Activated CD4-positive, alpha-beta memory T cell treated with anti-CD3 and anti-CD28 coated beads for 36 hours (primary cell): ENCODE measurements at regions of chr5 and their contacts with region 1.

Region 1: DNA sequence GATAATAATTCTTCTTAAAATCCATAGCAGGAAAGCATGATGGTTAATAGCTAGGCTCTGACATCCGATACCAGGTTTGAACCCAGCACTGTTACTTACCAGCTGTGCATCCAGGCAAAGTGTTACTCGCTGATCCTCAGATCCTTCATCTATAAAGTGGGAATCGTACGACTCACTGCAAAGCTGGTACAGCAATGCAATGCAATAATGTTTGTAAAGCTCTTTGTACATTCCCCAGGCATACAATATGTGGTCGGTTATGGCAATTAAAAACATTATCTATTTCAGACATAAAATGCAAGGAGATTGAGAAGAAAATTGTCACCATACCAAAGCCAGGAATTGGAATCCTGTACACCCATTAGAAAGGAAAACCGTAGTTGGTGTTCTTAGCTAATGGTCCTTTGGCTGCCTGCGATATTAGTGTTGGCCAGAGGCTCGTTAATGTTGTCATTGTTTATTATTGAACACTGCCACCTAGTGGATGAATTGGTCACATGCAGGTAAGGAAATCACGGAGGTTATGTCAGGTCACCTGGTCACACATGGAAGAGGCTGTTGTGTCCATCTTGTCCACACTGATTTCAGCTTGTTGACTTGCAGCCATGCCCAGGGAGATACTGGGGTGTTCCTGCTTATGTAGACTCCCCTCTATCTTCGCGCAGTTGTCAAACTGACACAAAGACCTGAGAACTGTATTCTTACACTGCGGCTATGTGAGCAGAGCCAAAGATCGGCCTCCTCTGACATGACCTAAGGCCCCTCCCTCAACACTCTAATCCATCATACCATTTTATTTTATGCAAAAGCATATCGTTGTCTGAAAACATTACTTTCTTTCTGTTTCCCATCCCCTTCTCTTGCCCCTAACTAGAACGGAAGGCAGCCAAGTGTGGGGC is 87.5 kb upstream of the PPP2R2B start:
- DNase-seq: peak; percentile 37
- H3K4me3 Mint-ChIP-seq: no peak overlapping the region
- H3K27ac Mint-ChIP-seq: no peak overlapping the region
- H3K4me1 Mint-ChIP-seq: no peaks in the 10 kb centered on the region
- H3K27me3 Mint-ChIP-seq: no peaks in the 10 kb centered on the region

Region 2: DNA sequence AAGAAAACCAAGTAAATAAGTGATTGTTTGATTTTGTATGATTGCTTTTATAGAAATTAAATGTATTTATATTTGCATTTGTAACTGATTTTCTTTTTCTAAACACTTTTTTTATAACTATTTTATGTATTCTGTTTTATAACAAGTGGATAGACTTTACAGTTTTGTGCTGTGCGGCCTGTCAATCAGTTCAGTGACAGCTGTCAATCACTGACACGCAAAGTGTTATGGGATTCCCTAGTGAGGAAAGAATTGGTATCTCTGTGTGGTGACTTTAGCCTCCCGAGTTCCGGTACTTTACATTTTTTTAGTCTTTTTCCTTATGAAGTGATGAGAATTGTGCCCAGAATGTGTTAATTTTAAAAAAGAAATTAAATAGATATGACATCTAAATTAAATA is 466.3 kb before region 1 on chr5:
- CTCF ChIA-PET with region 1: no interaction called
- POLR2A ChIA-PET with region 1: no interaction called
- intact Hi-C with region 1: no loop called
- DNase-seq: no peak
- H3K4me3 Mint-ChIP-seq: no peak overlapping the region
- H3K27ac Mint-ChIP-seq: no peak overlapping the region
- H3K4me1 Mint-ChIP-seq: no peaks in the 10 kb centered on the region
- H3K27me3 Mint-ChIP-seq: no peaks in the 10 kb centered on the region

Region 3: GRCh38 chr5:146533260-146533857 is 432.7 kb before region 1 on chr5:
- CTCF ChIA-PET with region 1: interaction called, 92 read pairs
- POLR2A ChIA-PET with region 1: no interaction called
- intact Hi-C with region 1: loop called (anchors 1 kb)
- DNase-seq: peak; percentile 83
- H3K4me3 Mint-ChIP-seq: no peak overlapping the region
- H3K27ac Mint-ChIP-seq: no peak overlapping the region
- H3K4me1 Mint-ChIP-seq: peaks cover 4% of the 10 kb centered on the region
- H3K27me3 Mint-ChIP-seq: peaks cover under 1% of the 10 kb centered on the region

Region 4: GRCh38 chr5:146541958-146542849 is 423.8 kb before region 1 on chr5:
- CTCF ChIA-PET with region 1: interaction called, 70 read pairs
- POLR2A ChIA-PET with region 1: no interaction called
- intact Hi-C with region 1: loop called (anchors 1 kb)
- DNase-seq: peak; percentile 79
- H3K4me3 Mint-ChIP-seq: no peak overlapping the region
- H3K27ac Mint-ChIP-seq: no peak overlapping the region
- H3K4me1 Mint-ChIP-seq: peaks cover 2% of the 10 kb centered on the region
- H3K27me3 Mint-ChIP-seq: no peaks in the 10 kb centered on the region

Region 5: DNA sequence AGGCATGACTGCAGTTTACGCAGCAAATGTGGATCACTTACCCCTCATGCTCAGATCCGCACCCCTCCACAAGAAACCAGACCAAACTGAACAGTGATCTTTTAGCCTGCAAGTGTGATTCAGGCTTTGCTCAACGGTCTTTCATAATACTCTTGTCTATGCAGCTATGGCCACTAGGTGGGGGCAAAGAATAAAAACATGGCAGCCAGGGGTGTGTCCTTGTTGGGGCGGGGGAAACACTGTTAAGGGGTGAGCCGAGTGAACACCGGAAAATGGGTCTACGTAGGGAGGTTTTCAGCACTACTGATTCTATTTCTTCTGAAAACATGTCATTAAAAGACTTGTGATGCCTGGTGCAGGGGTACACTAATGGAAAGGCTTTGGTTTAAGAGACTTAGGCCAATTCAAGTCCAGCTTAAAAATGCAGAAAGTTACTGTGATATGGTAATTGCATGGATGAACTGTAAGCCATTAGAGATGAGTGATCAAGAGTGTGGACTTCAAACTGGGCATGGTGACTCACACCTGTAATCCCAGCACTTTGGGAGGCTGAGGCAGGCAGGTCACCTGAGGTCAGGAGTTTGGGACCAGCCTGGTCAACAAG is 400.1 kb before region 1 on chr5:
- CTCF ChIA-PET with region 1: interaction called, 25 read pairs
- POLR2A ChIA-PET with region 1: no interaction called
- intact Hi-C with region 1: loop called (anchors 1 kb)
- DNase-seq: peak; percentile 56
- H3K4me3 Mint-ChIP-seq: no peak overlapping the region
- H3K27ac Mint-ChIP-seq: no peak overlapping the region
- H3K4me1 Mint-ChIP-seq: peaks cover 5% of the 10 kb centered on the region
- H3K27me3 Mint-ChIP-seq: no peaks in the 10 kb centered on the region

Region 6: GRCh38 chr5:146662229-146662628 is 303.8 kb before region 1 on chr5:
- CTCF ChIA-PET with region 1: interaction called, 102 read pairs
- POLR2A ChIA-PET with region 1: no interaction called
- intact Hi-C with region 1: loop called (anchors 1 kb)
- DNase-seq: no peak
- H3K4me3 Mint-ChIP-seq: no peak overlapping the region
- H3K27ac Mint-ChIP-seq: no peak overlapping the region
- H3K4me1 Mint-ChIP-seq: peaks cover 4% of the 10 kb centered on the region
- H3K27me3 Mint-ChIP-seq: no peaks in the 10 kb centered on the region

Region 7: GRCh38 chr5:146813346-146814157 is 152.5 kb before region 1 on chr5:
- CTCF ChIA-PET with region 1: no interaction called
- POLR2A ChIA-PET with region 1: no interaction called
- intact Hi-C with region 1: no loop called
- DNase-seq: no peak
- H3K4me3 Mint-ChIP-seq: no peak overlapping the region
- H3K27ac Mint-ChIP-seq: no peak overlapping the region
- H3K4me1 Mint-ChIP-seq: peaks cover 4% of the 10 kb centered on the region
- H3K27me3 Mint-ChIP-seq: no peaks in the 10 kb centered on the region

Region 8: GRCh38 chr5:146952168-146952567 is 13.8 kb before region 1 on chr5:
- CTCF ChIA-PET with region 1: interaction called, 13 read pairs
- POLR2A ChIA-PET with region 1: no interaction called
- intact Hi-C with region 1: no loop called
- DNase-seq: no peak
- H3K4me3 Mint-ChIP-seq: no peak overlapping the region
- H3K27ac Mint-ChIP-seq: no peak overlapping the region
- H3K4me1 Mint-ChIP-seq: no peaks in the 10 kb centered on the region
- H3K27me3 Mint-ChIP-seq: peaks cover 3% of the 10 kb centered on the region

Region 9: DNA sequence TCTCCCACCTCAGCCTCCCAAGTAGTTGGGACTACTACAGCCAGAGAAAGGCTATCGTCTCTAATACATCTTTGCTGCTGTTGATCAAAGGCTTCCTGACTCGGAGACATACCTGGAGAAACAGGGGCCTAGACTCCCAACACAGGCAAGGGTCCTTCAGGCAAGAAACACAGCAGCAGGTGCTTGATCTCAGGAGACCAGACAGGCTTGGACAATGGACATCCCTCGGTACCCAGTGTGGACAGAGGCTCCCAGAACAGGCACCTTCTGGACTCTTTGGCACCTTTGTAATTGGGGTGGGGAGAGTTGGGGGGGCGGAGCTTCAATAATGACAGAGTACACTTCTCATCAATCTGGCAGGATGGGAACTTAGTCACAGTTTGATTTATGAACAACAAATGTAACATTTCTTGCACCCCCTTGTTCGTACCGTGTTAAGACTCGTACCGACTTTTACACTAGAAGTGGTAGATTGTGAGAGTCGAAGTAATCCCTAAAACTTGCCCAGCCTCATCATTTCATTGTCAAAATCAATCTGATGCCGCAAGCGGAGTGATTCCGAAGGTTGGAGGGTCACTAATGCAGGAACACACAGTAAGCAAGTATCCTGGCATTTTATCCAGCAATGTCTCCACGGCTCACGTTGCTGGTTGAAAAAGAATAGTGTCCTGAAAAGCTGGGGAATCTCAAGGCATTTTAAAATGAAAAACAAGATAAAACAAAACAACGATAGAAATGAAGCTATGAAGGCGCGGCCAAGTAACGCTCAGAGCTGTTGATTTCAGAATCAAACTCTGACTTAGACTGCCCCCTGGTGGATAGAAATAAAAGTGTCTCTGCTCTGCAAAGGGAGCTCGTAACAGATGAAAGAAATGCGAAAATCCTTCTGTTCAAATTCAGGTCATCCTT is 222.4 kb after region 1 on chr5:
- CTCF ChIA-PET with region 1: interaction called, 38 read pairs
- POLR2A ChIA-PET with region 1: no interaction called
- intact Hi-C with region 1: loop called (anchors 2 kb)
- DNase-seq: peak; percentile 19
- H3K4me3 Mint-ChIP-seq: no peak overlapping the region
- H3K27ac Mint-ChIP-seq: no peak overlapping the region
- H3K4me1 Mint-ChIP-seq: peaks cover 3% of the 10 kb centered on the region
- H3K27me3 Mint-ChIP-seq: peaks cover 6% of the 10 kb centered on the region